Natural killer cell (primary cell): ENCODE measurements at regions of chr6 and their contacts with region 1.

Region 1: GRCh38 chr6:149060300-149060997 is 257.1 kb upstream of the TAB2 start:
- DNase-seq: peak; percentile 49 to 72
- ATAC-seq: peak; percentile 88 to 93 (median 91)
- H3K4me3 ChIP-seq: no peak overlapping the region
- H3K4me3 Mint-ChIP-seq: peak overlapping the region; percentile 81
- H3K27ac ChIP-seq: peak overlapping the region; percentile 76
- H3K27ac Mint-ChIP-seq: peak overlapping the region; percentile 85 to 90
- H3K4me1 ChIP-seq: peaks cover 36% of the 10 kb centered on the region
- H3K4me1 Mint-ChIP-seq: peaks cover 32 to 38% of the 10 kb centered on the region in 2 donors
- H3K27me3 ChIP-seq: no peaks in the 10 kb centered on the region
- H3K27me3 Mint-ChIP-seq: no peaks in the 10 kb centered on the region
- CTCF ChIP-seq: no peak

Region 2: GRCh38 chr6:149045404-149045803 is 15.0 kb before region 1 on chr6:
- intact Hi-C with region 1: loop called (anchors 1 kb)
- DNase-seq: peak in 1 of 2 donors; percentile 52
- ATAC-seq: peak in 2 of 3 donors; percentile 81 to 82
- H3K4me3 ChIP-seq: no peak overlapping the region
- H3K4me3 Mint-ChIP-seq: peak overlapping the region; percentile 17
- H3K27ac ChIP-seq: no peak overlapping the region
- H3K27ac Mint-ChIP-seq: peak overlapping the region; percentile 16 to 34
- H3K4me1 ChIP-seq: peaks cover 19% of the 10 kb centered on the region
- H3K4me1 Mint-ChIP-seq: peaks cover 30 to 37% of the 10 kb centered on the region in 2 donors
- H3K27me3 ChIP-seq: no peaks in the 10 kb centered on the region
- H3K27me3 Mint-ChIP-seq: no peaks in the 10 kb centered on the region
- CTCF ChIP-seq: no peak